Breast epithelium (tissue), 4 donors: ENCODE measurements at regions of chr1 and their contacts with region 1.

Region 1: GRCh38 chr1:183903101-183903500 is 98.2 kb downstream of the RGL1 start:
- DNase-seq: no peak
- H3K4me3 ChIP-seq: no peak overlapping the region
- H3K27ac ChIP-seq: no peak overlapping the region
- H3K4me1 ChIP-seq: no peaks in the 10 kb centered on the region
- H3K27me3 ChIP-seq: no peaks in the 10 kb centered on the region
- CTCF ChIP-seq: no peak
- POLR2A ChIP-seq: no peak

Region 2: GRCh38 chr1:183218971-183219615 is 684.0 kb before region 1 on chr1:
- intact Hi-C with region 1: no loop called
- DNase-seq: peak; percentile 56 to 75
- H3K4me3 ChIP-seq: no peak overlapping the region
- H3K27ac ChIP-seq: peak overlapping the region; percentile 50 to 83
- H3K4me1 ChIP-seq: peaks cover 0 to 6% of the 10 kb centered on the region in 2 donors
- H3K27me3 ChIP-seq: no peaks in the 10 kb centered on the region
- CTCF ChIP-seq: no peak
- POLR2A ChIP-seq: no peak

Region 3: GRCh38 chr1:183783767-183784637 is 119.1 kb before region 1 on chr1:
- intact Hi-C with region 1: no loop called
- DNase-seq: peak in 1 of 2 donors; percentile 37
- H3K4me3 ChIP-seq: no peak overlapping the region
- H3K27ac ChIP-seq: peak overlapping the region in 1 of 2 donors; percentile 2
- H3K4me1 ChIP-seq: no peaks in the 10 kb centered on the region
- H3K27me3 ChIP-seq: no peaks in the 10 kb centered on the region
- CTCF ChIP-seq: no peak
- POLR2A ChIP-seq: no peak

Region 4: DNA sequence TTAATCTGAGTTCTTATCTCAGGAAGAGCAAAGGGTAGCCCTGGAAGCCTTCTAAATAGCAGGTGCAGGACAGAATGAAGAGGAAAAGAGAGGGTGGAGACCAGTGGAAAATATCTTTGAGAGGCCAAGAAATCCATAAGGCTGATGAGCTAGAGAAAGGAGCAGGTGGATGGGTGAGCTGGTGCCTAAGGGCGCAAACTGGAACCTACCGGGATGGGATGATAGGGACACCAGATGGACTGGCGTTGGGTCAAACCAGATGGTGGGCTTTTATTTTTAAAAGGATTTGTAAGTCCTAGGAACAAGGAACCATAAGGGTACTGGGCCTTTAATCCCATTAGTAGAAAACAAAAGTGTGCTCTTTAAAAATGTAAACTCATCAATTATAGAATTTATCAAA is 38.5 kb before region 1 on chr1:
- intact Hi-C with region 1: loop called (anchors 1 kb)
- DNase-seq: no peak
- H3K4me3 ChIP-seq: no peak overlapping the region
- H3K27ac ChIP-seq: no peak overlapping the region
- H3K4me1 ChIP-seq: no peaks in the 10 kb centered on the region
- H3K27me3 ChIP-seq: no peaks in the 10 kb centered on the region
- CTCF ChIP-seq: no peak
- POLR2A ChIP-seq: no peak